Ascending aorta (tissue), 2 donors: ENCODE measurements at regions of chr1 and their contacts with region 1.

Region 1: GRCh38 chr1:204431310-204432165 is 19.9 kb upstream of the PPP1R15B start:
- DNase-seq: peak in 1 of 2 donors; percentile 89
- H3K4me3 ChIP-seq: no peak overlapping the region
- H3K27ac ChIP-seq: peak overlapping the region; percentile 59 to 65
- H3K4me1 ChIP-seq: peaks cover 0 to 19% of the 10 kb centered on the region in 2 donors
- H3K27me3 ChIP-seq: no peaks in the 10 kb centered on the region
- CTCF ChIP-seq: peak; percentile 81 to 90 (median 89)

Region 2: GRCh38 chr1:204411451-204412204 is 19.9 kb before region 1 on chr1 and contains the start of gene PPP1R15B:
- intact Hi-C with region 1: loop called (anchors 2 kb)
- DNase-seq: peak; percentile 84 to 98
- H3K4me3 ChIP-seq: peak within 1 kb of the TSS; percentile 76 to 100
- H3K27ac ChIP-seq: peak within 1 kb of the TSS; percentile 98 to 100
- H3K4me1 ChIP-seq: peaks cover 6 to 11% of the 10 kb centered on the region in 2 donors
- H3K27me3 ChIP-seq: no peaks in the 10 kb centered on the region
- CTCF ChIP-seq: no peak
- total RNA-seq, gene PPP1R15B: 36.1 TPM

Region 3: DNA sequence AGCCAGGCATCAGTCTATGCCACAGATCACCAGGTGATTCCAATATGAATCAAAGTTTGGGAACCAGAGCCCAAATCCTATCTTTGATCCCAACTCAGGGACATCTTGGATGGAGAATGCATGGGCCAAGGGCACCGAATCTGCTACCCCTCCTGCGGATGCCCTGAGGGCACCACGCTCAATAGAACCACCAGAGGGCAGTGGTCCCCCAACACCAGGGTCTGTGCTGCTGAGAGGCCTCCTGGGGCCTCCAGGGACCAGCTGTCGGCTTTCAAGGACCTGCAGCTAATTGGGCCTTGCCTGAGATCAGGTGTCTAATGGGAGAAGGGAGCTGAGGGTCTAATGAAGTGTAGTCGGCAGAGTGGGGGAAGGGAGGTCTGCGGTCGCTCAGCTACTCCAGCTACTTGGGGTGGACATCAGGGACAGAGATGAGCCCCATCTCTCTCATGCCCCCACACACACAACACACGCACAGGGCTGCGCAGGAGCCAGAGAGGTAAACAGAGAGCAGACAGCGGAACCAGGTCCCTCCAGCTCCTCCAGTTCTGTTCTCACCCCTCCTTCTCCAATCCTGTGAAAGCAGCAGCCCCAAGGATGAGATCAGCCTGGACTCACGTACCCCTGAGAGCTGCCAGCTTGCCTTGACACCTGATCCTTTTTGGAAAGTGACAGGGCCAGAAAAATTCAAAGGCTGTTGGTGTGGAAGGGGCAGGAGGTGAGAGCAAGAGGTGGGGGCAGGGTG is 15.0 kb after region 1 on chr1:
- intact Hi-C with region 1: loop called (anchors 1 kb)
- DNase-seq: peak in 1 of 2 donors; percentile 85
- H3K4me3 ChIP-seq: no peak overlapping the region
- H3K27ac ChIP-seq: peak overlapping the region; percentile 19 to 58
- H3K4me1 ChIP-seq: peaks cover 12 to 43% of the 10 kb centered on the region in 2 donors
- H3K27me3 ChIP-seq: no peaks in the 10 kb centered on the region
- CTCF ChIP-seq: peak; percentile 69 to 84 (median 72)

Region 4: DNA sequence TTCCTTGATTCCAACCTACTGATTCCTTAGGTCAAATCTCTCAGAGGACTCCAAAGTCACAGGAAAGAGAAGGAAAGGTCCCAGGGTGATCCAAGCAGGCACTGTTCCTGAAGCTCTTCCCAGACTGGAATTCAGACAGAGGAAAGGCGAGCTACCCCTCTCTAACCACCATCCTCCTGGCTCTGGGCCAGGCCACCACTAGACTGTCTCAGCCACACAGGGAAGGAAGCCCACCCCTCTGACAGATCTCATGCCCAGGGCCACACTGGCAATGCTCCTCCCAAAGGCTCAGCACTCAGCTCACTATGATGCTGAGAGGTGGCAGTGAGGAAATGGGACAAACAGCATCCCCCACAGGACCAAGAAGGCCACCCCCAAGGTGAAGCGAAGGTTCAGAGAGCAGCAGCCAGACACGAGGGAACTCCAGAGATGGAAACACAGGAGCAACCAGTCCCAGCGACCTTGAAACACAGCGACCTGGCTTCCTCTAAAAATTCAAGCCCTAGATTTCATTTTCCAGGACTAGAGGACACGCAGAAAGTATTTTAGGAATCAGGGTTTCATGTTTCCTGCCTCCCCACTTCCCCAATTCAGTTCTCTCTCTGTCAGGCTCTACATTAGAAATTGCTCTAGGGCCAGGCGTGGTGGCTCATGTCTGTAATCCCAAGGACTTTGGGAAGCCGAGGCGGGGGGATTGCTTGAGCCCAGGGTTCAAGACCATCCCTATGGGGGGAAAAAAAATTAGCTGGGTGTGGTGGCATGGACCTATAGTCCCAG is 44.3 kb after region 1 on chr1:
- intact Hi-C with region 1: no loop called
- DNase-seq: no peak
- H3K4me3 ChIP-seq: no peak overlapping the region
- H3K27ac ChIP-seq: no peak overlapping the region
- H3K4me1 ChIP-seq: peaks cover 24 to 49% of the 10 kb centered on the region in 2 donors
- H3K27me3 ChIP-seq: no peaks in the 10 kb centered on the region
- CTCF ChIP-seq: no peak